ENCODE measurements at regions of chr4 and their contacts with region 1.

Region 1: DNA sequence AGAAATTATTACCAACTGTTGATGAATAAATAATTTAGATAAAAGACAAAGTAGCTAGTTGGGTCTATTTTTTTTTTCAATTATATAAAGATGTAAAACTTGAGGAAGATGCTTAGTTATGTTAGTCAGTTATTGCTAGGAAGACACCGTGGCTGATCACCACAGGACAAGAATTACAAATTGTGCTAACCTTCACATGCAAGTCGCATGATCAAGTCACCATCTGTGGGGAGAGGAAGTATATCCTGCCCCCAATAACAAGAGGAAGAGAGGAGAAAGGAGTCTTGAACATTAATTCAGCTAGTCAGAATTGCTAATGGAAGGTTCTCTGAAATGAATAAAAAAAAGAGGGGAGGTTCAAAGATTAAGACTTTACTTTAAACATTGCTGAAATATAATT is 52.3 kb downstream of the CPEB2 start:
- DNase-seq: no peak
- ATAC-seq: no peak
- H3K4me3 ChIP-seq: no peak overlapping the region
- H3K27ac ChIP-seq: no peak overlapping the region
- H3K4me1 ChIP-seq: no peaks in the 10 kb centered on the region
- H3K27me3 ChIP-seq: no peaks in the 10 kb centered on the region
- CTCF ChIP-seq: no peak
- EP300 ChIP-seq: no peak
- POLR2A ChIP-seq: no peak
- RAD21 ChIP-seq: no peak

Region 2: DNA sequence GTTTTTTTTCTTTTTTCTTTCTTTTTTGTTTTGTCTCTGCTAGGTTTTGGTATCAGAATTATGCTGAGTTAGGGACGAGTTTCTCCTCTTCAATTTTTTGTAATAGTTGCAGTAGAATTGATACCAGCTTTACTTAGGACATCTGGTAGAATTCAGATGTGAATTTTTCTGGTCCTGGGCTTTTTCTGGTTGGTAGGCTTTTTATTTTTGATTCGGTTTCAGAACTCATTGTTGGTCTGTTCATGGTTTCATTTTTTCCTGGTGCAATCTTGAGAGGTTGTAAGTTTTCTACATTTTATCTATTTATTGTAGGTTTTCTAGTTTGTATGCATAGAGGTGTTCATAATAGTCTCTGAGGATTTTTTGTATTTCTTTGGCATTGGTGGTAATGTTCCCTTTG is 550.4 kb before region 1 on chr4:
- CTCF ChIA-PET with region 1: no interaction called
- POLR2A ChIA-PET with region 1: no interaction called
- RAD21 ChIA-PET with region 1: no interaction called
- SMC1A ChIA-PET with region 1: no interaction called
- in situ Hi-C with region 1: no loop called
- intact Hi-C with region 1: no loop called
- DNase-seq: no peak
- ATAC-seq: no peak
- H3K4me3 ChIP-seq: no peak overlapping the region
- H3K27ac ChIP-seq: no peak overlapping the region
- H3K4me1 ChIP-seq: no peaks in the 10 kb centered on the region
- H3K27me3 ChIP-seq: no peaks in the 10 kb centered on the region
- CTCF ChIP-seq: no peak
- EP300 ChIP-seq: no peak
- POLR2A ChIP-seq: no peak
- RAD21 ChIP-seq: no peak

Region 3: GRCh38 chr4:15024386-15024785 is 30.2 kb before region 1 on chr4:
- CTCF ChIA-PET with region 1: no interaction called
- POLR2A ChIA-PET with region 1: no interaction called
- RAD21 ChIA-PET with region 1: no interaction called
- SMC1A ChIA-PET with region 1: no interaction called
- in situ Hi-C with region 1: no loop called
- intact Hi-C with region 1: no loop called
- DNase-seq: no peak
- ATAC-seq: no peak
- H3K4me3 ChIP-seq: no peak overlapping the region
- H3K27ac ChIP-seq: no peak overlapping the region
- H3K4me1 ChIP-seq: peaks cover 4% of the 10 kb centered on the region; the same call in 1 of the 2 replicates
- H3K27me3 ChIP-seq: no peaks in the 10 kb centered on the region
- CTCF ChIP-seq: no peak
- EP300 ChIP-seq: no peak
- POLR2A ChIP-seq: no peak
- RAD21 ChIP-seq: no peak

Region 4: DNA sequence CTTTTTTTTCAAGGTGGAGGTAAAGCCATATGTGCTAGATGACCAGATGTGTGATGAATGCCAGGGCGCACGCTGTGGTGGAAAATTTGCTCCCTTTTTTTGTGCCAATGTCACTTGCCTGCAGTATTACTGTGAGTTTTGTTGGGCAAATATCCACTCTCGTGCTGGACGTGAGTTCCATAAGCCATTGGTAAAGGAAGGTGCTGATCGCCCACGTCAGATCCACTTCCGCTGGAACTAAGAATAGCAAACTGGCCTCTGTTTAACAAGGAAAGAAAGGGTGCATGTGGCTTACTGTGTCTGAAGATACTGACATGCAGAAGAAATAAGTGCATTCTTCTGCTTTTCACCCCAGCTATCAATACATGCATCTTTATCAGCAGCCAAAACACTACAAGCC is 11.6 kb after region 1 on chr4:
- CTCF ChIA-PET with region 1: interaction called, 4 read pairs
- POLR2A ChIA-PET with region 1: no interaction called
- RAD21 ChIA-PET with region 1: no interaction called
- SMC1A ChIA-PET with region 1: interaction called, 11 read pairs
- in situ Hi-C with region 1: no loop called
- intact Hi-C with region 1: no loop called
- DNase-seq: no peak
- ATAC-seq: no peak
- H3K4me3 ChIP-seq: no peak overlapping the region
- H3K27ac ChIP-seq: no peak overlapping the region
- H3K4me1 ChIP-seq: no peaks in the 10 kb centered on the region
- H3K27me3 ChIP-seq: no peaks in the 10 kb centered on the region
- CTCF ChIP-seq: no peak
- EP300 ChIP-seq: no peak
- POLR2A ChIP-seq: no peak
- RAD21 ChIP-seq: no peak